GM13977 (cell line): ENCODE measurements at regions of chr1 and their contacts with region 1.

Region 1: GRCh38 chr1:66253330-66253921 is 280.5 kb upstream of the SGIP1 start:
- DNase-seq: peak; percentile 40
- CTCF ChIP-seq: peak; percentile 81

Region 2: DNA sequence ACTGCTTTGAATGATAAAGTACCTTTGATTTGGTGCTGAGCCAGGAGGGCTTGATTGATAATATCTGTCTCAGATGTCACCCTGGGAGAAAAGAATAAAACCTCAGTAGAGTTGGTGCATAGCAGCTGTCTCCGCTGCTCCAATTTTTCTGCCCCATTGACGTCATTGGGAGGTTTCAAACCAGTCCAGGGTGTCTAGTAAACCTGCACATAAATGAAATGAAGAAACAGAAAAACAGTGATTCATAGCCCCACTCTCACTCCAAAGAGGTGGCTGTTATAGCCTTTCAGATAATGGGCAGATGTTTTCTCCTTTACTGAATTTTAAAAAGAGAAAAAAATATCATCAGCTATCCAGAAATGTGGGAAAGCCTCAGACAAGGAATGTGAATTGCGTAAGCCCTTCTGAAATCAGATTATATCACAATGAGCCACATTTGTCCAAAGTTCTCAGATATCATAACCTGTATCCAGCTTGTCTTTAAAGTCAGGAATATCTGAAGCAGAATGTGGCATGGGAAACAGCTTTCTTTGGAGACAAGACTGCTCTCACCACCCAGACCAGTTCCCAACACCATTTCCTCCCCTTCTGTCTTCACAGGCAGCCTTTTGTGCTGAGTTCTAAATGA is 70.8 kb before region 1 on chr1:
- in situ Hi-C with region 1: no loop called
- DNase-seq: no peak
- CTCF ChIP-seq: no peak

Region 3: GRCh38 chr1:66197785-66198184 is 55.6 kb before region 1 on chr1:
- in situ Hi-C with region 1: no loop called
- DNase-seq: no peak
- CTCF ChIP-seq: no peak

Region 4: GRCh38 chr1:66339944-66340343 is 86.5 kb after region 1 on chr1:
- in situ Hi-C with region 1: loop called (anchors 10 kb)
- DNase-seq: no peak
- CTCF ChIP-seq: no peak

Region 5: DNA sequence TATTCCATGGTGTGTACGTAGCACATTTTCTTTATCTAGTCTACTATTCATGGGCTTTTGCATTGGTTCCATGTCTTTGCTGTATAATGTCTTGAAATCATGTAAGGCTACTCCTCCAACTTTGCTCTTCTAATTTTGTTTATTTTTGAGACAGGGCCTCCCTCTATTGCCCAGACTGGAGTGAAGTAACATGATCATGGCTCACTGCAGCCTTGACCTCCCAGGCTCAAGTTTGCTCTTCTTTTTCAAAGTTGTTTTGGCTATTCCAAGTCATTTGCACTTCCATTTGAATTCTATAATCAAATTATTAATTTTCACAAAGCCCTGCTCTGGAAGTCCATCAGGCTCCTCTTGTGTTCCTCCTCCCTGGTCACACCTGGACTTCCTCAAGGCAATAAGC is 190.4 kb after region 1 on chr1:
- in situ Hi-C with region 1: loop called (anchors 5 kb)
- DNase-seq: no peak
- CTCF ChIP-seq: peak; percentile 47